Sigmoid colon (tissue), 7 donors: ENCODE measurements at regions of chr2 and their contacts with region 1.

Region 1: GRCh38 chr2:105789745-105790460 is 45.2 kb downstream of the NCK2 start:
- DNase-seq: no peak
- H3K4me3 ChIP-seq: no peak overlapping the region
- H3K27ac ChIP-seq: peak overlapping the region in 2 of 4 donors; percentile 53 to 60
- H3K4me1 ChIP-seq: peaks cover 0 to 39% (median 22%) of the 10 kb centered on the region in 4 donors
- H3K27me3 ChIP-seq: no peaks in the 10 kb centered on the region
- CTCF ChIP-seq: no peak
- EP300 ChIP-seq: no peak
- POLR2A ChIP-seq: no peak

Region 2: GRCh38 chr2:105749583-105750400 is 40.1 kb before region 1 on chr2:
- intact Hi-C with region 1: loop called (anchors 5 kb)
- DNase-seq: no peak
- H3K4me3 ChIP-seq: no peak overlapping the region
- H3K27ac ChIP-seq: no peak overlapping the region
- H3K4me1 ChIP-seq: peaks cover 0 to 55% (median 40%) of the 10 kb centered on the region in 4 donors
- H3K27me3 ChIP-seq: no peaks in the 10 kb centered on the region
- CTCF ChIP-seq: no peak
- EP300 ChIP-seq: no peak
- POLR2A ChIP-seq: no peak

Region 3: GRCh38 chr2:106104332-106105062 is 314.6 kb after region 1 on chr2:
- intact Hi-C with region 1: no loop called
- DNase-seq: no peak
- H3K4me3 ChIP-seq: no peak overlapping the region
- H3K27ac ChIP-seq: no peak overlapping the region
- H3K4me1 ChIP-seq: peaks cover 0 to 25% (median 8%) of the 10 kb centered on the region in 4 donors
- H3K27me3 ChIP-seq: no peaks in the 10 kb centered on the region
- CTCF ChIP-seq: peak; percentile 86 to 95 (median 92)
- EP300 ChIP-seq: no peak
- POLR2A ChIP-seq: no peak